ENCODE measurements at regions of chr22 and their contacts with region 1.

Region 1: DNA sequence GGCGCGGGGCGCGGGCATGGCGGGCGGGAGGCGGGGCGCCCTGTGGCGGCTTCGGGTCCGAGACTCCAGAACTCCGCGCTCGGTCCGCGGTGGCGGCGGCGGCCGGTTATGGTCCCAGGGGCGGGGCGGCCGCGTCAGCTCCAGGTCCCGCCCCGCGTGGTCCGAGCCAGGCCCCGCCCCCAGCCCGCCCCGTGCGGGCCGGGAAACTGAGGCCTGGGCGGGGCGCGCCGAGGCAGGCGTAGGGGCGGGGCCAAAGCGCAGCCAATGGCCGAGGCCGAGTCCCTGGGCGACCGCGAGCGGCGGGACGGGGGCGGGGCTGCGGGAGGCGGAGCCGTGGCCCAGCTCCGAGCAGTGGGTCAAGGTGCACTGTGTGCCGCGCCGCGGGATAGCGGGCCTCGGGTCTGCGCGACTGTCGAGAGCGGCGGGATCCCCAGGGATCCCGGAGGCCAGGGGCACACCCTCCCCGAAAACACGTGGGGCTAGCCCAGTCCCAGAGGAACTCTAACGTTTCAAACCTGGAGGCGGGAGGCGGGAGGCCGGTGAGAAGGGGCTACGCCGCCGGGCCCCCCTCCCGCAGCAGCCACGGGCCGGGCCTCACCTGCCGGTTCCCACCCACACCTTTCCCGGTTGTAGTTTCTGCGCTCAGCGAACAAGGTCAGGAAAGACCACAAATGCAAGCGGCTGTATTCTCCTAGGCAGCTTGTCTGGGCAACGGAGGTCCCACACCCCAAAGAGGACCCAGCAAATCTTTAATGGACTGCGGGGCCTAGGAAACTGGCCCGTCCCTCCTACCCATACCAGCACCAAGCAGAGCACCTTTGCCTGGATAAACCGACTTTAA is at the start of gene SLC25A1:
- DNase-seq: peak; percentile 38
- H3K4me3 ChIP-seq: peak within 1 kb of the TSS; percentile 68
- H3K27ac ChIP-seq: peak within 1 kb of the TSS; percentile 65
- H3K27me3 ChIP-seq: no peaks in the 10 kb centered on the region
- CTCF ChIP-seq: no peak
- polyA plus RNA-seq, gene SLC25A1: 18.4 and 31.4 TPM in 2 replicates

Region 2: DNA sequence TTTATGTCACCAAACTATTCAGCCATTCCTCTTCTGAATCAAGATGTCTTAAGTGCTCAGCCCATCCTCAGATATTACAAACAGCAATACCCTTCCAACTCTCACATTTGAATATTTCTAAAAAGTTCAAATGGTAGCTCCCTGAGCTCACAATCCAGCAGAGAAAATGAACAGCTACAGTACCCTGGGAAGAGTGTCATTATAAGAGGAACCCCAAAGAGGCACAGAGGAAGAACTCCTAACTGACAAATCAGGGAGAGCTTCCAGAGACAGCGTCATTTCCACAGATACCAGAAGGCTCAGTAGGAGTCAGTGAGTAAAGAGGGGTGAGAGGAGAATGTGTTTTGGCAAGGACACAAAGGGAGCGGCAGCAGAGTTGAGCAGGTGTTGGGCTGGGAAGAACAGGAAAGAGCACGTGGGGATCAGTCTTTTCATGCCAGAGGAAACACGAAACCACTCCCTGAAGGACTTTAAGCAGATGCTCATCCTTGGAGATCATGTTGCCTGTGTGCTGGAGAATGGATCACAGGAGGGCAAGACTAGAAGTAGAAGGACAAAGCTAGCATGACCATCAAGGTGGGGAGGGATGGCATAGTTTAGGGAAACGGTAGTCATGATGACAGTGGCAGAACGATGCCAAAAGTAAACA is 108.3 kb after region 1 on chr22:
- CTCF ChIA-PET with region 1: interaction called, 12 read pairs
- POLR2A ChIA-PET with region 1: interaction called, 6 read pairs
- DNase-seq: peak; percentile 30
- H3K4me3 ChIP-seq: no peak overlapping the region
- H3K27ac ChIP-seq: peak overlapping the region; percentile 52
- H3K27me3 ChIP-seq: no peaks in the 10 kb centered on the region
- CTCF ChIP-seq: no peak

Region 3: GRCh38 chr22:19479357-19480172 is 300.7 kb after region 1 on chr22 and contains the start of gene CDC45:
- CTCF ChIA-PET with region 1: interaction called, 10 read pairs
- POLR2A ChIA-PET with region 1: interaction called, 6 read pairs
- DNase-seq: peak; percentile 96
- H3K4me3 ChIP-seq: peak within 1 kb of the TSS; percentile 98
- H3K27ac ChIP-seq: peak within 1 kb of the TSS; percentile 99
- H3K27me3 ChIP-seq: no peaks in the 10 kb centered on the region
- CTCF ChIP-seq: no peak
- polyA plus RNA-seq, gene CDC45: 8.3 and 9.3 TPM in 2 replicates